Activated B cell treated with CpG ODN at 0.5 μM for 24 hours (primary cell): ENCODE measurements at regions of chr9 and their contacts with region 1.

Region 1: DNA sequence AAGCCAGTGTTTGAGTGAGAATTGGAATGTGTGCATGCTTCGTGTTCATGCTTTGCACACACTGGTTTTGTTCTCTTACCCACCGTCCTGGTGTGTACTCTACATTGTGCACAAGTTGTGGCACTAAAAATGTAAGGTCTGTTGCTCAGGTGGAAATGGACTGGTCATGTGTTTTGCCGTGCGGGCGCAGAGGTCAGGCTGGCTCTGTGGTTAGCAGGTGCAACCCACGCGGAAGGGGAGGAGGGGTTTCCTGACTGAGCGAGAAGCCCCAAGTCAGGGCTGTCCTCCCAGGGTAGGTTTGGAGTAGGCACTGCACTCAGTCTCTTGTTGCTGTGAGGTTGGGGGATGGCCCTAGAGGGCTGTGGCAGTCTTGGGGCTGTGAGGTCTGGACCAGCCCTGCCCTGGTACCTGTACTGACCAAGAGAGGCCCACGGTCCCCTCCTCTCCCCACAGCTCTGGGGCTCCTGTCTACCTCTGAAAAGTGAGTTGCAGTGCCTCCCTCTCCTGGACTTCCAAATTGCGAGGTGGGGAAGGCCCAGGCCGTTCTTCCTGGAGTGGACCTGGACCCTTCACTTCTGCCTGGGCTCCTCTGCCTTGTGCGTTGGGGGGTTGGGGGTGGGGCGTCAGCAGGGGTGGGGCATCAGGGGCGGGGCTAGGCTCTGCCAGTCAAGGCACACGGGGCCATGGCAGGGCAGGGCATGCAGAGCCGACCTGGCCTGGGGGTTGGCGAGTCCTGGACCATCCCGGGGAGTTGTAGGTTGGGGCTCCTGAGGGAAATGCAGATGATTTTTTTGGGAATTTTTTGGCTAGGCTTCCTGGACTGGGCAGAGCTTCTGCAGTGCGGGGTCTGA is 86.9 kb downstream of the EHMT1 start:
- DNase-seq: peak; percentile 36
- ATAC-seq: peak; percentile 73
- H3K4me3 Mint-ChIP-seq: peak overlapping the region; percentile 67
- H3K27ac Mint-ChIP-seq: peak overlapping the region; percentile 86
- H3K4me1 Mint-ChIP-seq: peaks cover 72% of the 10 kb centered on the region
- H3K27me3 Mint-ChIP-seq: no peaks in the 10 kb centered on the region
- CTCF ChIP-seq: no peak

Region 2: DNA sequence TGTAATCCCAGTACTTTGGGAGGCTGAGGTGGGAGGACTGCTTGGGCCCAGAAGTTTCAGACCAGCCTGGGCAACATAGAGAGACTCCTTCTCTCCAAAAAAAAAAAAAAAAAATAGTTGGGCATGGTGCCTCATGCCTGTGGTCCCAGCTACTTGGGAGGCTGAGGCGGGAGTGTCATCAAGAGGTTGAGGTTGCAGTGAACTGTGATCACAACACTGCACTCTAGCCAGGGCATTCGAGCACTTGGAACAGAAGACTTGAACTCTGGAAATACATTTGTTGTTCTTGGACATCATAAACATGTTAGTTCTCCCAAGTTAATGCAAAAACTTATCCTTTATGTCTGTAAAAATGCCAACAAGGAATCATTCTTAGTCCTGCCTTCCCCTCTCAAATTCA is 57.3 kb before region 1 on chr9:
- CTCF ChIA-PET with region 1: no interaction called
- POLR2A ChIA-PET with region 1: no interaction called
- intact Hi-C with region 1: no loop called
- DNase-seq: no peak
- ATAC-seq: no peak
- H3K4me3 Mint-ChIP-seq: no peak overlapping the region
- H3K27ac Mint-ChIP-seq: no peak overlapping the region
- H3K4me1 Mint-ChIP-seq: peaks cover 52% of the 10 kb centered on the region
- H3K27me3 Mint-ChIP-seq: no peaks in the 10 kb centered on the region
- CTCF ChIP-seq: no peak

Region 3: GRCh38 chr9:137689745-137690529 is 15.7 kb before region 1 on chr9:
- CTCF ChIA-PET with region 1: interaction called, 11 read pairs
- POLR2A ChIA-PET with region 1: interaction called, 3 read pairs
- intact Hi-C with region 1: loop called (anchors 2 kb)
- DNase-seq: no peak
- ATAC-seq: no peak
- H3K4me3 Mint-ChIP-seq: no peak overlapping the region
- H3K27ac Mint-ChIP-seq: no peak overlapping the region
- H3K4me1 Mint-ChIP-seq: peaks cover 73% of the 10 kb centered on the region
- H3K27me3 Mint-ChIP-seq: no peaks in the 10 kb centered on the region
- CTCF ChIP-seq: no peak

Region 4: DNA sequence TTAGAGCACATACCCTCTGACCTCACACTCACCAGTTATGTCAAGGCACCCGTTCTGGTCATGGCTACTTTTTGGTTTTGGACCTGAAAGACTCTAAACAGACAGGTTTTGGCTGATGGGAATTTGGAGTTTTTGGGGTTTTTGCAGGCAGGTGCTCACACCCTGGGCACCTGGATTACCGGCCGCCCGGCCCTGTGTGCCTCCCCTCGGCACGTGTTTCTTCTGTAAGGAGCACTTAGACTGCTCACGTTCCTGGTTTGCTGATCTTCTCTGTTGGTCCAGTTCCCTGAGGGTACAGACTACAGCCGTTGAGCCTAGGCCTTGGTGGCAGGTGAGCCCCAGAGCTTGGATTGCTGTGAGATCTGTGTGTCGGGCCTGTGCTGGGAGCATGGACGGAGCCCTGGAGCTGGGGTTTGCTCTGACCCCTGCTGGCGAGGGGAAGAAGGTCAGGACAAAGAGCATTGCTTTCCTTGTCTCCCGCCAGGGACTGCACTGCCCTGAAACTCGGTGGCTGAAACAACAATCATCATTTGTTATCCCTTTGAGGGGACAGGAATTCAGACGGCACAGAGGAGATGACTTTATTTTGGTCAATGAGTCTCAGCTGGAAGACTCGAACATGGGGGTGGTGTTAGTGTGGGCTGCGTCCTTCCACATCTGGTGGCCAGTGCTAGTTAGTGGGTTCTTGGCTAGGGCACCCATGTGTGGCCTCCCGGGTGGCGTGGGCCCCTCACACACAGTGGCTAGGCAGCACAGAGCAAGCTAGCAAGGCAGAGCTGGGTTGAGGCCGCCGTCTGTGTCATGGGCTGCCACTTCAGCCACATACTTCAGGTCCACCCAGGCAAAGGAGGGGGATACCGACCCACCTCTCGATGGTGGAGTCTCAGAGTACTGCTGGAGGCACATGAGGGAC is 10.4 kb before region 1 on chr9:
- CTCF ChIA-PET with region 1: interaction called, 11 read pairs
- POLR2A ChIA-PET with region 1: interaction called, 3 read pairs
- intact Hi-C with region 1: loop called (anchors 2 kb)
- DNase-seq: no peak
- ATAC-seq: peak; percentile 76
- H3K4me3 Mint-ChIP-seq: no peak overlapping the region
- H3K27ac Mint-ChIP-seq: peak overlapping the region; percentile 37
- H3K4me1 Mint-ChIP-seq: peaks cover 72% of the 10 kb centered on the region
- H3K27me3 Mint-ChIP-seq: no peaks in the 10 kb centered on the region
- CTCF ChIP-seq: no peak

Region 5: GRCh38 chr9:137723783-137724445 is 18.2 kb after region 1 on chr9:
- CTCF ChIA-PET with region 1: no interaction called
- POLR2A ChIA-PET with region 1: no interaction called
- intact Hi-C with region 1: no loop called
- DNase-seq: no peak
- ATAC-seq: no peak
- H3K4me3 Mint-ChIP-seq: no peak overlapping the region
- H3K27ac Mint-ChIP-seq: peak overlapping the region; percentile 91
- H3K4me1 Mint-ChIP-seq: peaks cover 37% of the 10 kb centered on the region
- H3K27me3 Mint-ChIP-seq: no peaks in the 10 kb centered on the region
- CTCF ChIP-seq: no peak